ENCODE measurements at regions of chr1 and their contacts with region 1.

Region 1: DNA sequence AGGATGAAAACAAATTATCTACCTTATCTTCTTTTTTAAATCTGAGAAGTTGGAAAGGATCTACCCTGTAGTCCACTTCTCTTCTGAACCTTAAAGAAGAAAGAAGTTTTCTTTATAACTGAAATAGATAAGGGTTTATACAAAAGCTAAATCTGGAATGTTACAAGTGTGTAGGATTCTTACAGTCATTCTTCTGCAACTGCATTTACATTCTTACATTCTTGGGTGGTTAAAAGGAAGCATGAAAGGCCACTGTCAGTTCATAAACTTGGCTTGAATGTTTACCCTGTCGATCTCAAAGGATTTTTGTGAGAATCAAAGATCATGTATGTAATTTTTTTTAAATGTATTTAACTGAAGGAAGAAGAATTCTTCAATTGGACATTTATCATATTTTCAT is 142.1 kb upstream of the BRINP3 start:
- DNase-seq: no peak
- ATAC-seq: no peak
- H3K4me3 Mint-ChIP-seq: no peak overlapping the region
- H3K27ac Mint-ChIP-seq: no peak overlapping the region
- H3K4me1 Mint-ChIP-seq: no peaks in the 10 kb centered on the region
- H3K27me3 Mint-ChIP-seq: no peaks in the 10 kb centered on the region

Region 2: DNA sequence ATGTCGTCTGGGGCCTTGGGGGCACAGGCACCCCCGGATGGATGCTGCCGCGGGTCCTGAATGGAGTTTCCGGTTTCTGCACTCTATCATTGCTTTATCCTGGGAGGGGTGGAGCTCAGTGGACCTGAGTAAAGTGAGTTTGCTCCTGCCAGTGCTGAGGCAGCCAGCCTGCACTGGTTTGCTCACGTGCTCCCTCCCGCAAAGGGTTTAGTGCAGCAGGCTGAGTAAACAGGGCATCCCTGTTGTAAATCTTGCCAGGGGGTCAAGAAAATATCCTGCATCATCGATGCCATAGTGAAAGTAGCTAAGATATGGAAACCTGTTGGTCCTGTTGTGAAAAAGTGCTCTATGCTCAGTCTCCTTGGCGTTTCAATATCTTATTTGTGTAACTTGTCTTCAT is 56.5 kb before region 1 on chr1:
- CTCF ChIA-PET with region 1: no interaction called
- POLR2A ChIA-PET with region 1: no interaction called
- intact Hi-C with region 1: loop called in 1 of 2 experiments (anchors 10 kb)
- DNase-seq: no peak
- ATAC-seq: no peak
- H3K4me3 Mint-ChIP-seq: no peak overlapping the region
- H3K27ac Mint-ChIP-seq: no peak overlapping the region
- H3K4me1 Mint-ChIP-seq: no peaks in the 10 kb centered on the region
- H3K27me3 Mint-ChIP-seq: no peaks in the 10 kb centered on the region

Region 3: GRCh38 chr1:190658907-190659306 is 39.2 kb after region 1 on chr1:
- CTCF ChIA-PET with region 1: no interaction called
- POLR2A ChIA-PET with region 1: no interaction called
- intact Hi-C with region 1: no loop called
- DNase-seq: no peak
- ATAC-seq: no peak
- H3K4me3 Mint-ChIP-seq: no peak overlapping the region
- H3K27ac Mint-ChIP-seq: no peak overlapping the region
- H3K4me1 Mint-ChIP-seq: no peaks in the 10 kb centered on the region
- H3K27me3 Mint-ChIP-seq: no peaks in the 10 kb centered on the region

Measured in activated CD4-positive, alpha-beta T cell treated with anti-CD3 and anti-CD28 coated beads for 36 hours (primary cell).